ENCODE measurements at regions of chr13 and their contacts with region 1.

Region 1: GRCh38 chr13:49279885-49280284 is 32.2 kb downstream of the CDADC1 start:
- DNase-seq: no peak
- ATAC-seq: no peak
- H3K4me3 ChIP-seq: no peak overlapping the region
- H3K27ac ChIP-seq: no peak overlapping the region
- H3K4me1 ChIP-seq: no peaks in the 10 kb centered on the region
- H3K27me3 ChIP-seq: no peaks in the 10 kb centered on the region
- CTCF ChIP-seq: no peak
- EP300 ChIP-seq: no peak
- POLR2A ChIP-seq: no peak
- RAD21 ChIP-seq: no peak

Region 2: GRCh38 chr13:49108196-49108595 is 171.7 kb before region 1 on chr13:
- CTCF ChIA-PET with region 1: no interaction called
- POLR2A ChIA-PET with region 1: no interaction called
- in situ Hi-C with region 1: no loop called
- intact Hi-C with region 1: loop called (anchors 10 kb)
- DNase-seq: no peak
- ATAC-seq: no peak
- H3K4me3 ChIP-seq: no peak overlapping the region
- H3K27ac ChIP-seq: no peak overlapping the region
- H3K4me1 ChIP-seq: no peaks in the 10 kb centered on the region
- H3K27me3 ChIP-seq: no peaks in the 10 kb centered on the region
- CTCF ChIP-seq: no peak
- EP300 ChIP-seq: no peak
- POLR2A ChIP-seq: no peak
- RAD21 ChIP-seq: no peak

Region 3: DNA sequence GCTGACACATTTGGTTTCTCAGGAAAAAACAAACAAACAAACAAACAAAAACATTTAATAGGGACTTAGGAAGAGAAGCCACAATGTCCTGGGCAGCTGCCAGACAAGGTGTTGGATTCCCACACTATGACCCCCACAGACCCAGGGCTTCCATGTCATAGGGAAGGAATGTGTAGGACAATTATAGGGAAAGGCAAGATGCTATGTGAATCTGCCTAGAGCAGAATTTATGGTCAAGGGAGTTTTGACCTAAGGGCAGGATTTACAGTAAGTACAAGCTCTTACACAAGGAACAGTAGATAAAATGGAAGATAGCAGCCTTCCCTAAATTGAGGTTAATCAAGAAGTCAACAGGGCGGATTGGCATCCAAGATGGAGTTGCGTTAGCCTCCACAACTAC is 41.2 kb before region 1 on chr13:
- CTCF ChIA-PET with region 1: no interaction called
- POLR2A ChIA-PET with region 1: no interaction called
- in situ Hi-C with region 1: no loop called
- intact Hi-C with region 1: loop called (anchors 5 kb)
- DNase-seq: no peak
- ATAC-seq: no peak
- H3K4me3 ChIP-seq: no peak overlapping the region
- H3K27ac ChIP-seq: no peak overlapping the region
- H3K4me1 ChIP-seq: no peaks in the 10 kb centered on the region
- H3K27me3 ChIP-seq: no peaks in the 10 kb centered on the region
- CTCF ChIP-seq: no peak
- EP300 ChIP-seq: no peak
- POLR2A ChIP-seq: no peak
- RAD21 ChIP-seq: no peak

Region 4: DNA sequence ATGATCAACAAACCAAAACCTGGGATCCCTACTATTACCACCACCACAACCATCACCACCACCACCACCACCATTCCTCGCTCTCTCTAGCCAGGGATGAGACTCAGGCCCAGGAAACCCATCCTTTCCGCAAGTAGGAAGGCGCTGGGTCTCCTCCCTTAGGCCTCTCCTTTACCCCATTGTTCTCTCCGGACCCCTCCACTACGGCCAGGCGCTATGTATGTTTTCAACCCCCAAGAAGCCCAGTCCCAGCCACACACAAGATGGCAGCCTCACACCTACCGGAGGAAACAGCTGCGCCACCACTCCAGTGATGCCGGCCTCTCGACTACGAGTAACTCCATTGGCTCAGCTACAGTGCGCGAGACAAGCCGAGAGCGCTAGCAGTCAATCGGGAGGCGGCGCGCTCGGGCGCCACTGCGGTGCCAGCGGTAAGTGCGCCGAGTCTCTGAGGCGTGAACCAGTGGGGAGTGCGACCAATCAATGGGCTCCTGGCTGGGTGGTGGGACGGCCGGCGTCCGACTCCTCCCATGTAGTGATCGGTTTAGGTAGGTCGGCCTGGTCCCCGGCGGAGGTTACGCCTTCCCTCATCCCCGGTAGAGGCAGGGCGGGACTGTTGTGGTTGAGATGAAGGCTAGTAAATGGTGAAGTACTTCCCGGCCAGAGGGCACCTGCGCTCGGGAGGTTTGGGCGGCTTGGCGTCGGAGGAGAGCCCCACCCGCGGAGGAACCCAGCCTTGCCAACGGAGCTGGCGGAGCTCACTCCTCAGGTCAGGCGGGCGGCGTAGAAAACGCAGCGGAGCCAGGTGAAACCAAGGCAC is 164.0 kb after region 1 on chr13 and contains the starts of genes CAB39L and SETDB2:
- CTCF ChIA-PET with region 1: no interaction called
- POLR2A ChIA-PET with region 1: no interaction called
- in situ Hi-C with region 1: no loop called
- intact Hi-C with region 1: no loop called
- DNase-seq: peak; percentile 90 to 97 (median 92)
- ATAC-seq: peak; percentile 96
- H3K4me3 ChIP-seq: peak within 1 kb of the TSS; percentile 81
- H3K27ac ChIP-seq: peak within 1 kb of the TSS; percentile 91
- H3K4me1 ChIP-seq: peaks cover 0 to 6% of the 10 kb centered on the region in 2 experiments; a peak in 2 of 5 replicates
- H3K27me3 ChIP-seq: no peaks in the 10 kb centered on the region
- CTCF ChIP-seq: peak; percentile 38 to 56 (median 42)
- EP300 ChIP-seq: no peak
- POLR2A ChIP-seq: peak; percentile 78
- RAD21 ChIP-seq: no peak
- polyA plus RNA-seq, gene CAB39L: 2.9 to 3.0 TPM
- polyA plus RNA-seq, gene SETDB2: 1.0 to 1.6 TPM